Activated CD4-positive, alpha-beta T cell treated with anti-CD3 and anti-CD28 coated beads, Interleukin-2, amount 10 ng/mL, durations not matched to agents 24 days and 14 days (primary cell): ENCODE measurements at regions of chr17 and their contacts with region 1.

Region 1: GRCh38 chr17:7687908-7688807 is at the start of gene WRAP53:
- DNase-seq: peak; percentile 99
- H3K4me3 Mint-ChIP-seq: peak within 1 kb of the TSS; percentile 93
- H3K27ac Mint-ChIP-seq: peak within 1 kb of the TSS; percentile 97
- H3K4me1 Mint-ChIP-seq: peaks cover 24% of the 10 kb centered on the region
- H3K27me3 Mint-ChIP-seq: no peaks in the 10 kb centered on the region
- total RNA-seq, gene WRAP53: 33.8 and 35.0 TPM in 2 replicates

Region 2: GRCh38 chr17:7252176-7253043 is 435.7 kb before region 1 on chr17 and contains the start of gene ELP5:
- intact Hi-C with region 1: loop called (anchors 5 kb)
- DNase-seq: peak; percentile 97
- H3K4me3 Mint-ChIP-seq: peak within 1 kb of the TSS; percentile 95
- H3K27ac Mint-ChIP-seq: peak within 1 kb of the TSS; percentile 100
- H3K4me1 Mint-ChIP-seq: peaks cover 45% of the 10 kb centered on the region
- H3K27me3 Mint-ChIP-seq: no peaks in the 10 kb centered on the region
- total RNA-seq, gene ELP5: 74.3 and 76.8 TPM in 2 replicates

Region 3: GRCh38 chr17:7403977-7404736 is 284.0 kb before region 1 on chr17 and contains the start of gene TMEM256:
- intact Hi-C with region 1: loop called (anchors 1 kb)
- DNase-seq: peak; percentile 98
- H3K4me3 Mint-ChIP-seq: peak within 1 kb of the TSS; percentile 96
- H3K27ac Mint-ChIP-seq: peak within 1 kb of the TSS; percentile 96
- H3K4me1 Mint-ChIP-seq: peaks cover 21% of the 10 kb centered on the region
- H3K27me3 Mint-ChIP-seq: peaks cover 23% of the 10 kb centered on the region
- total RNA-seq, gene TMEM256: 47.4 and 59.3 TPM in 2 replicates

Region 4: GRCh38 chr17:7561028-7561575 is 127.1 kb before region 1 on chr17:
- intact Hi-C with region 1: loop called (anchors 1 kb)
- DNase-seq: peak; percentile 96
- H3K4me3 Mint-ChIP-seq: peak overlapping the region; percentile 97
- H3K27ac Mint-ChIP-seq: peak overlapping the region; percentile 99
- H3K4me1 Mint-ChIP-seq: peaks cover 39% of the 10 kb centered on the region
- H3K27me3 Mint-ChIP-seq: peaks cover 2% of the 10 kb centered on the region

Region 5: DNA sequence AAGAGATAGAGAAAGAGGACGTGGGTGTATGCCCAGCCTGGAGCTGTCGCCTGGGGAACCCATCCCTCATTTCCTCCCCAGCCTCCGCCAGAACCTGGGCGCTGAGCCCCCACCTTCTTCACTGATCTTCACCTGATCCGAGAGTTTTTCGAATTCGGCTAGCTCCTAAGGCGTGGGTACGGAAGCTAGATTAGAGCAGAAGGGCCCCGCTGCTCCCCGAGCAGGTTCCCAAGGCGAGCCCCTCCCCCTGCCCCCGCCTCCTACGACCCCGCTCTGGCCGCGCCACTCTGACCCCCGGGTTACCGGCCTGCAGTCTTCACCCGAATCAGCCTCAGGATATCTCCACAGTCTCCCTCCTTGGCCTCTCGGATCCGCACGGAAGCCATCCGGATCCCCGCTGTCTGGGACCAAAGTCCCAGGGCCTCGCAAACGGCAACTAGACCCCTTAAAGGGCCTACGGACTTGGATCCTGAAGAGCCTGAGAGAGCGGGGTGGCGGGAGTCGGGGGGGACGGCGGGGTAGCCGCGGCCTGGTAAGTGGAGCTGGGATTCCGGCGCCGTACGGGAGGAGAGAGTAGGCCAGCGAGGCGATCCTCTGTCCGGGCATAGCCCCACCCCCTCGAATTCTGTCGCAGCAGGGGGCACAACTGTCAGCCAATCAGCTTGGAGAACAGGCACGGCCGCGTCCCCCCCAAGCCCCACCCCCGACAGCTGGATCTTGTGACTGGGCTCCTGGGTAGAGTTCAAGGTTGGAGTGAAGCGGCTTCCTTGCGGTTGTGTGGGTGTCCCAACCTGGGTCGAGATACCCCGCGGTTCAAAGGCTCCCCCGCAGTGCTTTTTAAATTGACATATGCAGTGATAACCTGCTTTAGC is 60.7 kb before region 1 on chr17 and contains the start of gene SAT2:
- intact Hi-C with region 1: loop called (anchors 1 kb)
- DNase-seq: peak; percentile 94
- H3K4me3 Mint-ChIP-seq: peak within 1 kb of the TSS; percentile 91
- H3K27ac Mint-ChIP-seq: peak within 1 kb of the TSS; percentile 80
- H3K4me1 Mint-ChIP-seq: peaks cover 11% of the 10 kb centered on the region
- H3K27me3 Mint-ChIP-seq: peaks cover 1% of the 10 kb centered on the region
- total RNA-seq, gene SAT2: 16.5 and 17.7 TPM in 2 replicates

Region 6: DNA sequence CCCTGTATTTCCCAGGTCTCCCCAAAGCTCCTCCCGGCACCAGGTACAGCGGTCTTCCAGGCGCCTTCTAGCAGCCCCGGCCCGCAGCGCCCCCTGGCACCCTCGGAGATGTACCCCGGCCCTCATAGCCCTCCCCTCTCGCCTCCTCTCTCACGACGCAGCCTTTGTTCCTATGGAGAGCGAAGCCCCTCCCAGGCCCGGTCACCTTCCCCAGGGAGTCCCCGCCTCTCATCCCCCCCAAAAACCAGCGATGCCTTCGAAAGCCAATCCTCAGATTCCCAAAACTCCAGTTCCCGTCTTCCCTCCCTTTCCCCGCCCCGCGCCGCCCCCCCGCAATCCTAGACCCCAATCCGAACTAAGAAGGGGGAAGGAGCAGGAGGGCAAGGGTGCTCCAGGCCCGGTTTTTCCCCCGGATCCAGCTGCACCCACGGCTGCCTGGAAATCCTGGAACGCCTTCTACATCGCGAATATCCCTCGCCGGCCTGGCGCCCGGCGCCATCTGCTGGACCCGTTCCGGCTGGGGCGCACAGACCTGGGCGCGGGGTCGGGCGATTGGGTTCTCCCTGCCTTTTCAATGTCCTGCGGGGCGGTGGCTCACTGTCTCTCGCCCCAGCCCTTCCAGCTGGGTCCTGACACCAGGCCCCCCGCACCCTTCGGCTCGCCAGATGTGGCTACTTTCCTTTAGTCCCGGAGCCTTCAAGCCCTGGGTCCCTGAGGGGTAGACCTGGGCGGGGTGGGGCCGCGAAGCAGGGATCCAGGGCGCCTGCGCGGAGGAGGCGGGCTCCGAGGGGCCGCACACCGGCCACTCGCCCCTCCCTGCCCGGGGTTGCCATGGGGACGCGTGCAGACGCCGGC is 29.0 kb after region 1 on chr17 and contains the start of gene DNAH2:
- intact Hi-C with region 1: loop called (anchors 1 kb)
- DNase-seq: peak; percentile 85
- H3K4me3 Mint-ChIP-seq: peak within 1 kb of the TSS; percentile 83
- H3K27ac Mint-ChIP-seq: no peak within 1 kb of the TSS
- H3K4me1 Mint-ChIP-seq: peaks cover 28% of the 10 kb centered on the region
- H3K27me3 Mint-ChIP-seq: peaks cover 76% of the 10 kb centered on the region
- total RNA-seq, gene DNAH2: not detected in 2 replicates

Region 7: DNA sequence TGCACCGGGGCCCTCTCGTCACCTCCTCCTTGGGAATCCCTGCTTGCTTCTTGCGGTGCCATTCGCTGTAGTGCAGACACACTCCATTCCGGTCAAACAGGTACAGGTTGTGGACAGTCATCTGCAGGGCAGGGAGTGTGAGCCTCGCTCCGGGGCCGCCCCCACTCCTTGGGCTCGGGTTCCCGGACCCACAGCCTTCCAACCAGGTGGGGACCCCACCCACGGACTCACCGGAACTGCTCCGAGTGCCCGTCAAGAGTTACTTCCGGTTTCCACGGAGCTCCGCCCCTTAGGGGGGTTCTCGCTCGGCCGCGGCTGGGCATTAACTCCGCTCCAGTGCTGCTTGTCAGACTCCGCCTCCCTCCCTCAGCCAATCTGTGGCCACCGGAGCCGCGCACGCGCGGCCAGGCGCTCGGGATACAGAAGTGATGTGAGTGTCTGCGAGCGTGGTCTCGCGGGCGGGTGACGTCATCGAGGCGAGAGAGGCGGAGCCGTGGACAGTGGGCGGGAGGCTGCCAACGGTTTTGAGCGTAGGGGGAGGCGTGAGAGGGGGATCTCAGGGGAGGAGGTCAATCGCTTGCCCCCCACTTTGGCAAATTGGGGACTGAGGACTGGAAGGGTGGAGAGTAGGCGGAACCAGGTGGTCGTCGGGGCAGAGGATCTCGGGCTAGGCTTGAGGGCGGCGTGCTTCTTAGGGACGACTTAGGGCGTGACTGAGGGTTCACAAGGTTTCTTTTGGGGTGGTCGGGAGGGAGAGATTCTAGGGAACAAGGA is 243.7 kb after region 1 on chr17 and contains the starts of genes CNTROB and TRAPPC1:
- intact Hi-C with region 1: loop called (anchors 5 kb)
- DNase-seq: peak; percentile 100
- H3K4me3 Mint-ChIP-seq: peak within 1 kb of the TSS; percentile 98
- H3K27ac Mint-ChIP-seq: peak within 1 kb of the TSS; percentile 99
- H3K4me1 Mint-ChIP-seq: peaks cover 42% of the 10 kb centered on the region
- H3K27me3 Mint-ChIP-seq: no peaks in the 10 kb centered on the region
- total RNA-seq, gene CNTROB: 52.4 and 54.5 TPM in 2 replicates
- total RNA-seq, gene TRAPPC1: 150 and 159 TPM in 2 replicates